ENCODE measurements at regions of chr7 and their contacts with region 1.

Region 1: GRCh38 chr7:77651573-77652162 is 44.6 kb upstream of the RSBN1L start:
- DNase-seq: peak; percentile 13
- ATAC-seq: peak; percentile 59
- H3K4me3 ChIP-seq: no peak overlapping the region
- H3K27ac ChIP-seq: no peak overlapping the region
- H3K4me1 ChIP-seq: no peaks in the 10 kb centered on the region
- H3K27me3 ChIP-seq: no peaks in the 10 kb centered on the region
- CTCF ChIP-seq: peak; percentile 54 to 80 (median 63)
- POLR2A ChIP-seq: no peak
- RAD21 ChIP-seq: peak; percentile 67

Region 2: DNA sequence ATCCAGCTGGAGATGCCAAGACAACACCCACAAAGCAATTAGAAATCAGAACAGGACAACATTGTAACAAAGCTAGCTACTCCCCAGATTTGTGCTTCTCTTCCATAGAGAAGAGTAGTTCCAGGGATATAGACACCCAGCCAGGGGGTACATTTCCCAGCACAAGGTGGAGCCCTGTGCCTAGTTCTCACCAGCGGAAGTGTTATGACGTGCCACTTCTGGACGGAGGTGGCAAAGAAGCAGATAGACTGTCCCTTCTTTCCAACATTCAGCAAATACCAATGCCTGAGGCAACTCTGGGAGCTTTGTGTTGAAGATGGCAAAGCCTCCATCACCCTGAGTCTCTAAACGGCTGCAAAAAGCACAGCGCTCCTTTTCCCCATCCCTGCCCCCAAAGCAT is 212.1 kb before region 1 on chr7:
- CTCF ChIA-PET with region 1: interaction called, 10 read pairs
- POLR2A ChIA-PET with region 1: no interaction called
- RAD21 ChIA-PET with region 1: no interaction called
- intact Hi-C with region 1: no loop called
- DNase-seq: no peak
- ATAC-seq: peak; percentile 90
- H3K4me3 ChIP-seq: no peak overlapping the region
- H3K27ac ChIP-seq: no peak overlapping the region
- H3K4me1 ChIP-seq: no peaks in the 10 kb centered on the region
- H3K27me3 ChIP-seq: no peaks in the 10 kb centered on the region
- CTCF ChIP-seq: peak; percentile 34 to 42 (median 41); a peak in 4 of 6 replicates
- POLR2A ChIP-seq: no peak
- RAD21 ChIP-seq: peak; percentile 70

Region 3: DNA sequence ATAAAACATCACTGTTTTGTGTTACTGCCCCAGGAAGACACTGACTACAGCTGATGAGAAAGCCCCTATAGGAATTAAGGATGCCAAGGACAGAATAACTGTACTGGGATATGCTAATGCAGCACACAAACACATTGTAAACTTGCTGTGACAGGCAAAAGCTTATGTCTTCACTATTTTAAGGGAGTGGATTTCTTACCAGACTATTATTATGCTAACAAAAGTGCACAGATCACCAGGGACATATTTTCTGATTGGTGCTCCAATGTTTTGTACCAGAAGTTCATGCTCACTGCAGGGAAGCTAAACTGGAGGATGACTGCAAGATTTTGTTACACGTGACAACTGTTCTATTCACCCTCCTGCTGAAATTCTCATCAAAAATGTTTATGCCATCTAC is 162.7 kb before region 1 on chr7:
- CTCF ChIA-PET with region 1: no interaction called
- POLR2A ChIA-PET with region 1: no interaction called
- RAD21 ChIA-PET with region 1: no interaction called
- intact Hi-C with region 1: no loop called
- DNase-seq: no peak
- ATAC-seq: no peak
- H3K4me3 ChIP-seq: no peak overlapping the region
- H3K27ac ChIP-seq: no peak overlapping the region
- H3K4me1 ChIP-seq: no peaks in the 10 kb centered on the region
- H3K27me3 ChIP-seq: no peaks in the 10 kb centered on the region
- CTCF ChIP-seq: no peak
- POLR2A ChIP-seq: no peak
- RAD21 ChIP-seq: no peak

Region 4: DNA sequence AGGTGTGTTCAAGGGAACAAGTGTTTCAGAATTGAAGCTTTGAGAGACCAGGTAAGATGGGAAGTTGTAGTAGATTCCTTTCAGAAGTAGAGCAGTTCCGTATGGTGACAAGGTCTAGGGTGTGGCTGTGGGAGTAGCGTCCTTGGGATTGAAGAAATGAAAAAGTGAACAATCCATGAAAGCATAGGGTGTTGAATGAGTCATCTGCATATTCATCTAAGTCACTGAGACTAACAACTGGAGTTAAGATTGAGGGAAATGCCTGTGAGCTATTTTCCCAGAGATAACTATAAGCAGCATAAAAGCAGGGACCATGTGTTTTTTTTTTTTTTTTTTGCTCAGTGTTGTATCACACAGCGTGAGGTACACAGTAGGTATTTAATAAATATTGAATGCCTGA is 281.7 kb after region 1 on chr7:
- CTCF ChIA-PET with region 1: interaction called, 10 read pairs
- POLR2A ChIA-PET with region 1: no interaction called
- RAD21 ChIA-PET with region 1: no interaction called
- intact Hi-C with region 1: no loop called
- DNase-seq: peak; percentile 22
- ATAC-seq: peak; percentile 62
- H3K4me3 ChIP-seq: no peak overlapping the region
- H3K27ac ChIP-seq: no peak overlapping the region
- H3K4me1 ChIP-seq: peaks cover 7 to 12% of the 10 kb centered on the region in 2 experiments; a peak in 3 of 4 replicates
- H3K27me3 ChIP-seq: no peaks in the 10 kb centered on the region
- CTCF ChIP-seq: no peak
- POLR2A ChIP-seq: no peak
- RAD21 ChIP-seq: no peak

Measured in HCT116 (cell line).